Right ventricle myocardium inferior (tissue), 1 donor: ENCODE measurements at regions of chr17 and their contacts with region 1.

Region 1: GRCh38 chr17:73132085-73132492 is 32.7 kb upstream of the SSTR2 start:
- DNase-seq: no peak
- ATAC-seq: no peak

Region 2: GRCh38 chr17:72884066-72884465 is 248.0 kb before region 1 on chr17:
- intact Hi-C with region 1: loop called (anchors 10 kb)
- DNase-seq: no peak
- ATAC-seq: no peak